Cardiac septum (tissue), 1 donor: ENCODE measurements at regions of chr12 and their contacts with region 1.

Region 1: DNA sequence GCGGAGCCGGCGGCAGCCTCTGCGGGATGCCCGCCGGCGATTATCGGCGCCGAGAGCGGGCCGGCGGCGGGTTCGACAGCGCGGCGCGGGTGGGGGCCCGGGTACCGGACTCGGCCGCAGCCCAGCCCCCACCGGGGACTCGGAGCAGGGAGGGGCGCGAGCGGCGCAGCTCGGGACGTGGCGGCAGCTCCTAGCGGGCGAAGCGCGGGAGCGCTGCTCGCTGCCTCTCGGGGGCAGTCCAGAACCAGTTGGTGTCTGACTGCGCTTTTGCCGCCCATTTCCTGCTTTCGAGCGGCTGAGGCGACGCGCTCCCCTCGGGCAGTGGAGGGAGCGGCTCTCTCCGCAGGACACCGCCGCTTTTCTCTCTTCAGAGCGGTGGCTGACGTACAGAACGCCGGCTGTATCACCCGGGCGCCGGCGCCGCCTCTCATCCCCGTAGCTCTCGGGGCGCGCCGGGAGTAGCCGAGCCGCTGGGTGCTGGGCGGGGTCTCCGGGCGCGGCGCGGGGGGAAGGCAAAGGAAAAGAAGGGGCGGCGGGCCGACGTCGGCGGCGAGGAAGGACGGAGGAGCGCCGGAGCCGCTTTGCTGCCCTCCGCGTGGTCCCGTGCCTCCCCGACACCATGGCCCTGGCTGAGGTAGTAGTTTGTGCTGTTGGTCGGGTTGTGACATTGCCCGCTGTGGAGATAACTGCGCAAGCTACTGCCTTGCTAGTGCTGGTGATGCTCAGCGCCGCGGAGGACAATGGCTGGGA is 136.6 kb downstream of the MON2 start:
- DNase-seq: peak; percentile 93

Region 2: GRCh38 chr12:62631471-62632410 is 28.5 kb after region 1 on chr12:
- intact Hi-C with region 1: loop called (anchors 2 kb)
- DNase-seq: peak; percentile 88

Region 3: GRCh38 chr12:62703011-62703380 is 99.8 kb after region 1 on chr12:
- intact Hi-C with region 1: loop called (anchors 5 kb)
- DNase-seq: no peak

Region 4: DNA sequence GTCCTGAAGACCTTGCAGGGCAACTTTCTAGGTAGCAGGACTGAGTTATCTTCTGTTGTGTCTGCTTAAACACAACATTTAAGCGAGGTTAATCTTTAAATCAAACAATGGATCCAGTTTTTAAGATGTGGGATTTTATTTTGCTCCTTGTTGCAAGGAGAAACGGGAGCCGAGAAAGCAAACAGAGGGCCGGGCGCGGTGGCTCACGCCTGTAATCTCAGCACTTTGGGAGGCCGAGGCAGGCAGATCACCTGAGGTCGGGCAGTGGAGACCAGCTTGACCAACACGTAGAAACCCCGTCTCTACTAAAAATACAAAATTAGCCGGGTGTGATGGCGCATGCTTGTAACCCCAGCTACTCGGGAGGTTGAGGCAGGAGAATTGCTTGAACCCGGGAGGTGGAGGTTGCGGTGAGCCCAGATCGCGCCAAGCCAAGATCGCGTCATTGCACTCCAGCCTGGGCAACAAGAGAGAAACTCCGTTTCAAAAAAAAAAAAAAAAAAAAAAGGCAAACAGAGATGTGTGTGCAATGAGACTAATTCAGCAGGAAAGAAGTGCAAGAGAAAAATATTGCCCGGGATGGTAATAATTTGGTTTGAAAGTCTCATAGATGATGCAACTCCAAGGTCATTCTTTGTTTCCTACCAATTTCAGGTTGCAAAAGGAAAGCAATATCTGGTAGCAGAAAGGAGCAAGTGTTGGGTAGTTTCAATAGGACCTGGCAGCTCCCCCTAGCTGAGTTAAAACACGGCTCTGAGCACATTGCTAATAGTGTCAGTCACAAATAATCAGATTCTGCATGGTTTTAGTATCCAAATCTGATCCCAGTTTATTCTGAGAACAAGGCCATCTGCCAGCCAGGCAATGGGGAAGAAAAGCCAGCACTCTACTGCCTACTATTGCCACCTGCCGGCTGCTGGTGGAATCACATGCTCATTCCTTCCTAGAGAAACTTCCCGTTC is 190.3 kb after region 1 on chr12:
- intact Hi-C with region 1: loop called (anchors 2 kb)
- DNase-seq: peak; percentile 92